Activated B cell treated with CpG ODN at 0.5 μM for 24 hours (primary cell): ENCODE measurements at regions of chr14 and their contacts with region 1.

Region 1: DNA sequence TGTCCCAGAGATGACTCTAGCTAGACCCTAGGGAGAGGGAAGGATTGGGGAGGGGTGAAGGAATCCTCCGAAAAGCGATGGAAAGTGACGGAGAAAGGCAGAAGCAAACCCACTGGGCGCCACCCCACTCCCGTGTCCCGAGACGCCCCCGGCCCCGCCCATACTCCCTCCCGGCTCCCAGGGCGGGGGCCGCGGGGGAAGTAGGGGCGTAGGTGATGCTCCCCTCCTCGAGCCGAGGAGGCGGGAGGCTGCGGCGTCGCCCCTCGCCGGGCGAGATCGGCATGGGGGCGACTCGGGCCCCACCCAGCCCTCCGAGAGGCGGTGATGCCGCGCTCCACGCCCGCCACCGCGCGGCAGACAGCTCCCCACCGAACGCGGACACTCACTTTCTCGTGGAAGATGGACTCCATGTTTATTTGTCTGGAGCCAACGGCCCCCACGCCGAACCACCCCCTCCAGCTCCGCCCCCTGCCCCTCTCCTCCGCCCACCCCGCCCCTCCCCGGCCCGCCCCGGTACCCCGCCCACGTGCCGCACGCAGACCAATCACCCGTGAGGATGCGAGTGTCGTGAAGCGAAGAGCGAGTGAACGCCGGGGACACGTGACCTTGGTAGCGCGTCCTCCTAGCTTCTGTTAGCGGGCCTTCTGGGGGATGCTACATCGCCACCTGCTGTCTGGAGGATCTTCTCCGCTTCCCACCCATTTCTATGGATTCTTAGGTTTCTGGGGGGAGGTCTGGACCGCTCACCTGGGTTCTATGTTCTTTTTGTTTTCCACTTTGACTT is at the start of gene ATXN3:
- DNase-seq: peak; percentile 81
- ATAC-seq: peak; percentile 91
- H3K4me3 Mint-ChIP-seq: peak within 1 kb of the TSS; percentile 100
- H3K27ac Mint-ChIP-seq: peak within 1 kb of the TSS; percentile 92
- H3K4me1 Mint-ChIP-seq: peaks cover 46% of the 10 kb centered on the region
- H3K27me3 Mint-ChIP-seq: no peaks in the 10 kb centered on the region
- CTCF ChIP-seq: no peak
- total RNA-seq, gene ATXN3: 23.8 and 29.3 TPM in 2 replicates

Region 2: GRCh38 chr14:91244501-91244901 is 861.8 kb before region 1 on chr14 and contains the start of gene GPR68:
- CTCF ChIA-PET with region 1: no interaction called
- POLR2A ChIA-PET with region 1: no interaction called
- intact Hi-C with region 1: no loop called
- DNase-seq: no peak
- ATAC-seq: no peak
- H3K4me3 Mint-ChIP-seq: peak within 1 kb of the TSS; percentile 75
- H3K27ac Mint-ChIP-seq: peak within 1 kb of the TSS; percentile 91
- H3K4me1 Mint-ChIP-seq: peaks cover 61% of the 10 kb centered on the region
- H3K27me3 Mint-ChIP-seq: no peaks in the 10 kb centered on the region
- CTCF ChIP-seq: no peak
- total RNA-seq, gene GPR68: 1.4 and 1.8 TPM in 2 replicates

Region 3: DNA sequence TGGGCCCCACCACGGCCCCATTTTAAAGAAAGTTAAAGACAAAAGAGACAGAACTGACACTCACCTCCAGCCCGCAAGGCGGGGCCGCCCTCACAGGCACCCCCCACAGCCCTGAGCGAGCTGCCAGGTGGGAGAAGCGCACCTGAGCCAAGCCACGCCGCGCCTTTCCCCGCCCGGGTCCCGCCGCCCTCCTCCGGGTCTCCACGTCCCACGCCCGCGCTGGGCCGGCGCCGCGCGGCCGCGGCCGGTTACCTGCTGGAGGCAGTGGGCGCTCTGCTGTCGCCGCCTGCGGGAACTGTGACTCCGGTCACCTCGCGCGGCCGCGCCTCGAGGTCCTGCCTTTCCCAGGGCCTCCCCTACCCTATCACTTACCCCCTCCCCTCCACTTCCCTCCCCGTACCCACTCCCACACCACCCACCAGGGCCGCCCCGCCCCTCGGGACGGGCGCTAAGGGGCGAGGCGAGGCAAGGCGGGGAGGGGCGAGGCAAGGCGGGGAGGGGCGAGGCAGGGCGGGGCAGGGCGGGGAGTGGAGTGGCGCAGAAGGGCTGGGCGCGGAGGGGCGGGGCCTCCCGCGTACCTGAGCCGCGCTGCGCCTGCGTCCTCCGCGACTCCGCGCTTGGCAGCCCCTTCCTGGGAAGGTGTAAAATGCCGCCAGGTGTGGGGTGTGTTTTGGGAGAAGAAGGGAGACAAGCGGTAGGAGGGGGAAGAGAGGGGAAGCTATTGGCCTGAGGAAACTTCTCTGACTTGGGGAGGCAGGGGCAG is 270.0 kb before region 1 on chr14:
- CTCF ChIA-PET with region 1: no interaction called
- POLR2A ChIA-PET with region 1: no interaction called
- intact Hi-C with region 1: loop called (anchors 2 kb)
- DNase-seq: peak; percentile 68
- ATAC-seq: peak; percentile 94
- H3K4me3 Mint-ChIP-seq: peak overlapping the region; percentile 89
- H3K27ac Mint-ChIP-seq: peak overlapping the region; percentile 78
- H3K4me1 Mint-ChIP-seq: peaks cover 53% of the 10 kb centered on the region
- H3K27me3 Mint-ChIP-seq: peaks cover 5% of the 10 kb centered on the region
- CTCF ChIP-seq: no peak

Region 4: GRCh38 chr14:92121670-92122350 is 15.5 kb after region 1 on chr14 and contains the starts of genes CPSF2 and NDUFB1:
- CTCF ChIA-PET with region 1: interaction called, 28 read pairs
- POLR2A ChIA-PET with region 1: interaction called, 141 read pairs
- intact Hi-C with region 1: loop called (anchors 1 kb)
- DNase-seq: peak; percentile 78
- ATAC-seq: peak; percentile 92
- H3K4me3 Mint-ChIP-seq: peak within 1 kb of the TSS; percentile 100
- H3K27ac Mint-ChIP-seq: peak within 1 kb of the TSS; percentile 100
- H3K4me1 Mint-ChIP-seq: peaks cover 35% of the 10 kb centered on the region
- H3K27me3 Mint-ChIP-seq: no peaks in the 10 kb centered on the region
- CTCF ChIP-seq: no peak
- total RNA-seq, gene CPSF2: 46.9 and 53.2 TPM in 2 replicates
- total RNA-seq, gene NDUFB1: 88.2 and 94.2 TPM in 2 replicates

Region 5: DNA sequence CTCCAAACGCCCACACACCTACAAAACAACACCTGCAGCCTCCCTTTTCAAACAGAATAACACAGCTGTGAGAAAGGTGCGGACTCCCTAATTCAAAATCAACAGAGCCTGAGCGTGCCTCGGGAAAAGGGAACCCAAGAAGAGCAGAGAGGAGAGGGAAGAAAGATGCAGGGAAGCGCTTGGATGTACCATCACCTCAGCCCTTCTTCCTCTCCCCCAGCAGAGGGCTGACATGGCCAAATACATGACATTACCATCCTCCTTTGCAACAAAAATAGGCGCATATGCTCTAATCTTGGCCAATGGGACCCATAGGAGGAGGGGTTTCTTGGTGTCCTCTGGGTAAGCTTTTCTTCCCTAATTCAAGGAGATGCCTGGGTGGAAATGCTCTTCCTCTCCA is 93.4 kb after region 1 on chr14:
- CTCF ChIA-PET with region 1: no interaction called
- POLR2A ChIA-PET with region 1: no interaction called
- intact Hi-C with region 1: no loop called
- DNase-seq: no peak
- ATAC-seq: no peak
- H3K4me3 Mint-ChIP-seq: no peak overlapping the region
- H3K27ac Mint-ChIP-seq: no peak overlapping the region
- H3K4me1 Mint-ChIP-seq: no peaks in the 10 kb centered on the region
- H3K27me3 Mint-ChIP-seq: peaks cover 12% of the 10 kb centered on the region
- CTCF ChIP-seq: no peak

Region 6: DNA sequence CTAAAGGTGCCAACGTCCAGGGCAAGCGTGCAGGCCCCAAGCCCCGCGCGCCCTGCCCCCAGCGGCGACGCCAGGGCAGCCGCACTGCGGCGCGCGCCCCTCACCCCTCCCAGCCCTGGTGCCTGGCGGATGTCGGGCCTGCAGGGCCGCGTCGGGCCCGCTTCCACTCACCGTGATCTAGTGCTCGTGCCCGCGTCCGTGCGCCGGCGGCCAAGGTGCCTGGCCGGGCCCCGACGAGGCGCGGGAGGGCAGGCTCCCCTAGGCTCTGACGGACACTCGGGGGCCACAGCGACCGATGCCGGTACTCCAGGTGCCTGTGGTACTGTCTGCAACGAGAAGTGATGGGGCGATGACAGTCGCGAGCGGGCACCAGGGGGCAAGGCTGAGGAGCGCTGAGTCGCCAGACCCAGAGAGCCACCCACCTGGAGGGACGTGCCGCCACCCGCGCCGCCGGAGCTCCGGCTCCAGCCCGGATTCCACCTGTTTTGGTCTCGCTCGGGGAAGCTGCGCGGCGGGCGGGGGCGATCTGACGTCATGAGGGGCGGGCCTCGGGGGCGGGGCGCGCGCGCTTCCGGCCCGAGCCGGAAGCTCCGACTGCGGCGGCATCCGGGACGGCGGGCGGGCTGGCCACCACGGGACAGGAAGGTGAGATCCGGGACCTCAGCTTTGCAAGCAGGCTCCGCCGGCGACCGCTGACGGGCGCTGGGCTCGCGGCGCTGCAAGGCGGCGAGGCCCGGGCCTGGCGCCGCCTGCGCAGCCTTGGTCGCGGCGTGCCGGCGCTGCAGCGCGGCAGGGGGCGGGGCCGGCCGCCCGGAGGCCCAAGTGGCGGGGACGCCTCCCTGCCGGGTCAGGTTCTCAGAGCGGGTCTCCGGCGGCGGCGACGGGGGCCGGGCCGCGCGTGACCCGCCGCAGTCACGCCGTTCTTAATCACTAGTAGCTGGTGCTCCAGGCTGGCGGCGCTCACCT is 1078.3 kb after region 1 on chr14 and contains the starts of genes LYSET and MOAP1:
- CTCF ChIA-PET with region 1: no interaction called
- POLR2A ChIA-PET with region 1: no interaction called
- intact Hi-C with region 1: loop called (anchors 10 kb)
- DNase-seq: peak; percentile 81
- ATAC-seq: peak; percentile 83
- H3K4me3 Mint-ChIP-seq: peak within 1 kb of the TSS; percentile 92
- H3K27ac Mint-ChIP-seq: peak within 1 kb of the TSS; percentile 93
- H3K4me1 Mint-ChIP-seq: peaks cover 24% of the 10 kb centered on the region
- H3K27me3 Mint-ChIP-seq: no peaks in the 10 kb centered on the region
- CTCF ChIP-seq: no peak
- total RNA-seq, gene LYSET: 17.6 and 19.3 TPM in 2 replicates
- total RNA-seq, gene MOAP1: 21.3 and 24.4 TPM in 2 replicates